ENCODE measurements at regions of chr11 and their contacts with region 1.

Region 1: DNA sequence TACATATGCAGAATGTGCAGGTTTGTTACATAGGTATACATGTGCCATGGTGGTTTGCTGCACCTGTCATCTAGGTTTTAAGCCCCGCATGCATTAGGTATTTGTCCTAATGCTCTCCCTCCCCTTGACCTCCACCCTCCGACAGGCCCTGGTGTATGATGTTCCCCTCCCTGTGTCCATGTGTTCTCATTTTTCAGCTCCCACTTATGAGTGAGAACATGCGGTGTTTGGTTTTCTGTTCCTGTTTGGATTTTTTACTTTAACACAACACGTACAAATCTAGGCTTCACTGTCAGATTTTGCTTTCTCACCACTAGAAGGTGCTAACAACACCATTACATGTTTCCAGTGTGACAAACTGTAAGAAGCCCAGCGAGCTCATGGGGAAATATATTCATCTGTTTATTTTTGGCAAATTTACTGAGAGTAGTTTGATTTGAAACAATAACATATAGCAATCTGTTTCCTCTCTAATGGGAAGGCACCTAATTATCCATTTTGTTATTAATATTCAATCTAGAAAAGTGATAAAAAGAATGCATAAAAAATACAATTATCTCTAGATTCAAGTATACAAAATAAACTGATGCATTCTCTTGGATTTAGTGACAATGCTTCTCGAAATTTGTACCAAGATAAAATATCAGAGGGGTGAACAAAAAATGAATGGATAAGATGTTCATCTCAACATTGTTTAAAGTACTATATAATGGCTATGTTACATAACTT is 23.2 kb upstream of the BIRC3 start:
- DNase-seq: no peak
- H3K4me3 Mint-ChIP-seq: peak overlapping the region; percentile 81
- H3K27ac Mint-ChIP-seq: peak overlapping the region; percentile 84
- H3K4me1 Mint-ChIP-seq: peaks cover 33% of the 10 kb centered on the region
- H3K27me3 Mint-ChIP-seq: no peaks in the 10 kb centered on the region

Region 2: GRCh38 chr11:102171101-102171500 is 122.9 kb before region 1 on chr11:
- CTCF ChIA-PET with region 1: no interaction called
- POLR2A ChIA-PET with region 1: no interaction called
- intact Hi-C with region 1: no loop called
- DNase-seq: no peak
- H3K4me3 Mint-ChIP-seq: no peak overlapping the region
- H3K27ac Mint-ChIP-seq: no peak overlapping the region
- H3K4me1 Mint-ChIP-seq: no peaks in the 10 kb centered on the region
- H3K27me3 Mint-ChIP-seq: peaks cover 16% of the 10 kb centered on the region

Region 3: DNA sequence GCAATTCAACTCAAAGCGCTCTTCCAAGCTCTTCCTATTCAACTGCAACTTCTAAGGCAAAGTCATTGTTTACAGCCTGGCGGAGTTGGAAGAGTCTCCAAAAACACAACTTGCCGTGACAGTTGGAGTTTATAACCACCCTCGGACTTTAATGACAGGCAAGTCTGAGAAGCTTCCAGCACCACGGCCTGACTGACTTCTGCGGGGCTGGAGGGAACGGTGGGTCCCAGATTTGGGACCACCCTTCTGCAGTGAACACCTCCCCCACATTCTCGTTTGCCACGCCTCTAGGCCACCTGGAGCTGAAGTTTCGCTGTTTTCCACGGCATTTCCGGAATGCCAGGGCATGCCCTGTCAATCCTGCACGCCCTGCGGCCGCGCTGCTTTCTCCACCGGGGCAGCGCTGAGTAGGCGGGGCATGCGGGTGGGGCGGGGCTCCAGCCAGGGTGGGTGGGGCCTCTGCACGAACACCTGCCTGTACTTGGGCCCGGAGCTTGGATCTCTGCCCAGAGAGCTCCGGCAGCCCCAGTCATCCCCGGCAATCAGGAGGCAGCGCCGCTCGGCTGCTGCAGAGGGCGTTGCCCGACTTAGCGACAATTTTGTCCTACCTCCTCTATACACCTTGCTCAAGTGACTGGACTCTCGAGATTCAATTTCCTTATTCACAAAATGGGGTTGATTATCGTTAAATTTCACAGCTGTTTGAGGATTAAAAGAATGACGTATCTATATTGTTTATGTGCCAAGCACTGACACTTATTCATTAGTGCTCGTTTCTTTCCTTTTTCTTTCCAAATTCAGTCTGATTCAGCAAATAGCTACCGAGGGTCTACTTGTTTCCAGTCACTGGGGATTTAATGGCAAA is 25.5 kb before region 1 on chr11:
- CTCF ChIA-PET with region 1: interaction called, 19 read pairs
- POLR2A ChIA-PET with region 1: no interaction called
- intact Hi-C with region 1: no loop called
- DNase-seq: peak; percentile 92
- H3K4me3 Mint-ChIP-seq: peak overlapping the region; percentile 24
- H3K27ac Mint-ChIP-seq: no peak overlapping the region
- H3K4me1 Mint-ChIP-seq: peaks cover 31% of the 10 kb centered on the region
- H3K27me3 Mint-ChIP-seq: no peaks in the 10 kb centered on the region

Region 4: GRCh38 chr11:102306048-102306585 is 12.1 kb after region 1 on chr11:
- CTCF ChIA-PET with region 1: interaction called, 288 read pairs
- POLR2A ChIA-PET with region 1: interaction called, 3 read pairs
- intact Hi-C with region 1: loop called (anchors 1 kb)
- DNase-seq: peak; percentile 52
- H3K4me3 Mint-ChIP-seq: peak overlapping the region; percentile 59
- H3K27ac Mint-ChIP-seq: peak overlapping the region; percentile 85
- H3K4me1 Mint-ChIP-seq: peaks cover 69% of the 10 kb centered on the region
- H3K27me3 Mint-ChIP-seq: no peaks in the 10 kb centered on the region

Region 5: GRCh38 chr11:102317099-102317767 is 23.2 kb after region 1 on chr11 and contains the start of gene BIRC3:
- CTCF ChIA-PET with region 1: interaction called, 288 read pairs
- POLR2A ChIA-PET with region 1: interaction called, 14 read pairs
- intact Hi-C with region 1: loop called (anchors 1 kb)
- DNase-seq: peak; percentile 96
- H3K4me3 Mint-ChIP-seq: peak within 1 kb of the TSS; percentile 95
- H3K27ac Mint-ChIP-seq: peak within 1 kb of the TSS; percentile 100
- H3K4me1 Mint-ChIP-seq: peaks cover 56% of the 10 kb centered on the region
- H3K27me3 Mint-ChIP-seq: no peaks in the 10 kb centered on the region
- total RNA-seq, gene BIRC3: 135 to 139 TPM

Region 6: DNA sequence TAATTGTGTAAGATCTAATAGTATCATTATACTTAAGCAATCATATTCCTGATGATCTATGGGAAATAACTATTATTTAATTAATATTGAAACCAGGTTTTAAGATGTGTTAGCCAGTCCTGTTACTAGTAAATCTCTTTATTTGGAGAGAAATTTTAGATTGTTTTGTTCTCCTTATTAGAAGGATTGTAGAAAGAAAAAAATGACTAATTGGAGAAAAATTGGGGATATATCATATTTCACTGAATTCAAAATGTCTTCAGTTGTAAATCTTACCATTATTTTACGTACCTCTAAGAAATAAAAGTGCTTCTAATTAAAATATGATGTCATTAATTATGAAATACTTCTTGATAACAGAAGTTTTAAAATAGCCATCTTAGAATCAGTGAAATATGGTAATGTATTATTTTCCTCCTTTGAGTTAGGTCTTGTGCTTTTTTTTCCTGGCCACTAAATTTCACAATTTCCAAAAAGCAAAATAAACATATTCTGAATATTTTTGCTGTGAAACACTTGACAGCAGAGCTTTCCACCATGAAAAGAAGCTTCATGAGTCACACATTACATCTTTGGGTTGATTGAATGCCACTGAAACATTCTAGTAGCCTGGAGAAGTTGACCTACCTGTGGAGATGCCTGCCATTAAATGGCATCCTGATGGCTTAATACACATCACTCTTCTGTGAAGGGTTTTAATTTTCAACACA is 29.7 kb after region 1 on chr11:
- CTCF ChIA-PET with region 1: interaction called, 288 read pairs
- POLR2A ChIA-PET with region 1: interaction called, 14 read pairs
- intact Hi-C with region 1: loop called (anchors 1 kb)
- DNase-seq: no peak
- H3K4me3 Mint-ChIP-seq: no peak overlapping the region
- H3K27ac Mint-ChIP-seq: peak overlapping the region; percentile 72
- H3K4me1 Mint-ChIP-seq: peaks cover 51% of the 10 kb centered on the region
- H3K27me3 Mint-ChIP-seq: no peaks in the 10 kb centered on the region

Region 7: DNA sequence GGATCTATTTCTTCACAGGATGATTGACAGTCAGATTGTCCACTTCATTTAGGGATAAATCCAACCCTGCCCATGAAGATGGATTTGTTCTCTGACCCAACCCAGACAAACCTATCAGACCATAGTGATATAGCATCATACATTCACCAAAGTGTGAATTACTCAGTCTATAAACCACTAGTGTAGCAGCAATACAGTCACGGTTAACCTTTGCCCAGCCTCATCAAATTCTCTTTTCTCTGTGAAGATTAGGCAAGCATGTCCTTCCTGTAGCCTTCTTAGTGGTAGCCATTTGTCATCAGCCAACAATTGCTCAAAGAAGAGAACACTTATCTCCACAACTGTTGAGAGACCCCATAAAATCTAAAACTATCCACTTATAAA is 38.6 kb after region 1 on chr11:
- CTCF ChIA-PET with region 1: interaction called, 17 read pairs
- POLR2A ChIA-PET with region 1: no interaction called
- intact Hi-C with region 1: no loop called
- DNase-seq: no peak
- H3K4me3 Mint-ChIP-seq: no peak overlapping the region
- H3K27ac Mint-ChIP-seq: peak overlapping the region; percentile 28
- H3K4me1 Mint-ChIP-seq: peaks cover 27% of the 10 kb centered on the region
- H3K27me3 Mint-ChIP-seq: no peaks in the 10 kb centered on the region

Region 8: GRCh38 chr11:102495161-102496042 is 201.4 kb after region 1 on chr11:
- CTCF ChIA-PET with region 1: interaction called, 22 read pairs
- POLR2A ChIA-PET with region 1: no interaction called
- intact Hi-C with region 1: no loop called
- DNase-seq: peak; percentile 22
- H3K4me3 Mint-ChIP-seq: no peak overlapping the region
- H3K27ac Mint-ChIP-seq: no peak overlapping the region
- H3K4me1 Mint-ChIP-seq: peaks cover 18% of the 10 kb centered on the region
- H3K27me3 Mint-ChIP-seq: peaks cover 7% of the 10 kb centered on the region